Aorta (tissue), 5 donors: ENCODE measurements at regions of chr16 and their contacts with region 1.

Region 1: DNA sequence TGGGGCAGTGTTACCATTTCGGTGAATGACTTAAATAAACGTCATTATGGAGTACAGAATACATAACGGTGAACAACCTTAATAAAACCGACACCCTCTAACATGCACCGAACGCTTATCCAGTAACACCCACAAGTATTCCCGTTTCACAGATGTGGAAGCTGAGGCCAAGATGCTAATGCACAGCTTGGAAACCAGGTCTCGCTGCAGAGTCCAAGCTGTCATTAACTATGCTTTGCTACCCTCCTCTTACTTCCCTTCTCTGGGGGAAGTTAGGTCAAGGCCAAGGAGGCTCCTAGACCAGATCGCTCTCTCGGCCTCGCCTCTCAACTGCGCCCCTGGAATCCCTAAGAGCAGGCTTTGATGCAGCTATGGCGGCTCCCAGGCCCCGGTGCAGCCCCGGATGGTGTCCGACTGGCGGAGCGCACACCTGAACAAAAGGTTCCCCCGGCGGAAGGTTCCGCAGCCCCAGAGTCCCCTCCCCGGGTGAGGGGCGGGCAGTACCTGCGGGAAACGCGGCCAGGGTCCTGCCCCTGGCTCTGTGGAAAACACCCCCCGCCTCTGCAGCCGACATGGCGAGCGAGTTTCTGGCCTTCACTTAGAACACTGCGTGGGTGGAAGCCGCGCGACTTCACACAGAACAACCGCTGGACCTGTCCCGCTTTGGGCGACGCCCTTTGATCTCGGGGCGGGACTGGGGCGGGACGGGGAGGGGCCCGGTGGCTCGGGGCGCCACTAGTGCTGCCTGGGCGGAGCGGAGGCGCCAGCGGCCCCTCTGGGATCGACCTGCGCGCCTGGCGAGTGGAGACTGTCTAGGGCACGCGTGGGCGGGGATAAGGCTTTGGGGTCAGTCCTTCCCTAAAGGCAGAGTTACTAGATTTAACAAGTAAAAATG is at the start of gene CPPED1:
- DNase-seq: peak; percentile 97 to 98
- ATAC-seq: peak; percentile 97
- H3K4me3 ChIP-seq: peak within 1 kb of the TSS; percentile 34 to 64
- H3K27ac ChIP-seq: peak within 1 kb of the TSS in 1 of 2 donors; percentile 93
- H3K4me1 ChIP-seq: peaks cover 0 to 3% of the 10 kb centered on the region in 2 donors
- H3K27me3 ChIP-seq: no peaks in the 10 kb centered on the region
- total RNA-seq, gene CPPED1: 19.4 to 20.2 TPM

Region 2: DNA sequence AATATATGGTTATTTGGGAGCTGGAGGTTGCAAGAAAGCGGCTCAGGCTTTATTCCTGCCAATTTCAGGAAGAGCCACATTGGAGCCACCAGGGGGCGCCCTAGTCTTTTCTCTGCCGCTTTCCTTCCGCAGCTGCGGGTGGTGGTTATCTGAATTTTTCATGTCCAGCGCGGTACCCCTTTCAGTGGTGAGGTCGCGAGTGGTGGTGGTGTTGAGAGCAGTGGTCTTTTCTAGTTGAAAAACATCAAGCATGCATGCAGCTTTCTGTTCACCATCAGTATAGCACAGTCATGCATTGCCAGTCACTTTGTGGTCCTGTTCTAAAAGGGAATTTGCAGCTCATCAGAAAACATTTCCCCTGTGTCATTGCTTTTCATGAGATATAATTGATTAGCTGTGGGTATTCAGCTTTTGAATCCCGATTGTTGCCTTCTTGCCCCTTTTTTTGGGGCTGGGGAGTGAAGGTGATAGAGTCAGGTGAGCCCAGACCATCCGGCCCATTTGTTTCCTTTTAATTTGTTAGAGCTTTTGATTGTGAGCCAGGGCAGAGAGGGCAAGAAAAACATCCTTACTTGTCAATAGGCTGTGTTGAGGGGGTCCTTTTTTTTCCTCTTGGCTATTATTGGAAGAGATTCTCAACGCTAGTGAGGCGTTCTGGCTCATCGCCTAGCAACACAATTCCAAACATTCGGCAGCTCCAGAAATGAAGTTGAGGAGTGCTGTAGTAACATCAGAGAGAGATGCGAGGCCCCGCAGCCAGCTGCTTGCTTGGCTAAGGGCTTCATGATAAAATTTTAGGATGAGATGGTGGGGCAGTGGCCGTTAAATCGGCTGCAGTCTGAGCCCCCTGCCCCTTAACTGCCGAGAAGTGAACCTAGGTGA is 707.9 kb before region 1 on chr16:
- intact Hi-C with region 1: loop called in 1 of 2 experiments (anchors 10 kb)
- DNase-seq: peak; percentile 72 to 90
- ATAC-seq: peak; percentile 68
- H3K4me3 ChIP-seq: no peak overlapping the region
- H3K27ac ChIP-seq: no peak overlapping the region
- H3K4me1 ChIP-seq: peaks cover 0 to 2% of the 10 kb centered on the region in 2 donors
- H3K27me3 ChIP-seq: no peaks in the 10 kb centered on the region

Region 3: DNA sequence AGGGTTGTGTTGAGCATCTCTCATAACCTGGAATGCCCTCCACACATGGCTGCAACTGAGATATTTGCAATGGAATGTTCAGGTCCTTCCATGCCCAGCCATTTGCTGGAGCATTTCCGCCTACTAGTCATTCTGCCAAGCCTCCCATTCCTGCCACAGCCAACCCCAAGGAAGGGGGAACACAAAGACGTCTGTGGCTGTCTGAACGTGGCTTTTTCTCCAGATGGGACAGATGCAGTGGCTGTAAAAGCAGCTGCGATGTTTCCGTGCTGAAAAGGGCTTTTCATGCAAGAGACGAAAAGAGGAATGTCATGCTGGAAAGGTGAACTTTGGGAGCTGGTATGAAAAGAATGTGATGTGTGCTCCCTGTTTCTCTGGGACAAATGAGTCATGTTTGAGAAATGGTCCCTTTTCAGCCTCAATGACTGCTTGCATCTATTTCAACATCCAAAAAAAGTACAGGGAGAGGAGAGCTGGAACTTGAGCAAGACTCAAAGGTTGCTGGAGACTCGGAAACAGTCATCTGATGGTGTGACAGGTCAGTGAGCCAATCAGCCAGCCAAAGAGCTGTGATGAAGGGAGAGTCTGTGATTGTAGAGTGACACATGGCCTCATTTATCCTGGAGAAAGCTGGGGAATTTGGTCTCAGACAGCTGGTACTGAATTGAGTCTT is 306.8 kb after region 1 on chr16:
- intact Hi-C with region 1: loop called in 1 of 2 experiments (anchors 10 kb)
- DNase-seq: peak; percentile 56 to 83
- ATAC-seq: peak; percentile 61
- H3K4me3 ChIP-seq: no peak overlapping the region
- H3K27ac ChIP-seq: peak overlapping the region; percentile 53 to 93
- H3K4me1 ChIP-seq: peaks cover 1 to 8% of the 10 kb centered on the region in 2 donors
- H3K27me3 ChIP-seq: no peaks in the 10 kb centered on the region